ENCODE measurements at regions of chr4 and their contacts with region 1.

Region 1: GRCh38 chr4:163681208-163681821 is 186.8 kb downstream of the TMA16 start:
- DNase-seq: peak; percentile 89
- H3K4me3 ChIP-seq: no peak overlapping the region
- H3K27ac ChIP-seq: no peak overlapping the region
- H3K4me1 ChIP-seq: peaks cover 4% of the 10 kb centered on the region
- CTCF ChIP-seq: peak; percentile 89

Region 2: DNA sequence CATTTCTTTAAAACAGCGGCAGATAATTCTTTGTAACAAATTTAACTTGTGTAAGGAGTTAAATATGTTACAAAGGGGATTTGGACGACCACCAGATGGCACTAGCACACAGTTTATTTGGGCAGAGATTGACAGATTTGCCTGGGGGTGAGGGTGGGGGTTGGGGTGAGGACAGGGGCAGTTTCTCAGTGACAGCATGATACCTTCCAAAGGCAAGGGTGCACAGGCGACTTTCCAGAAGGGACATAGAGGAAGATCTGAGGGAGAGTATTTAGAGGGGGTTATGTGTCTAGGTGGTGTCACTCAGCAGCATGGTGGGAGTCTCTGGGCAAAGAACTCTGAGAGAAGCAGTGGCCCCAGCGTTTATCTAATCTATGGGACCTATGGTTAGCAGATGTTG is 196.4 kb before region 1 on chr4:
- CTCF ChIA-PET with region 1: no interaction called
- POLR2A ChIA-PET with region 1: no interaction called
- intact Hi-C with region 1: loop called (anchors 2 kb)
- DNase-seq: peak; percentile 77
- H3K4me3 ChIP-seq: no peak overlapping the region
- H3K27ac ChIP-seq: no peak overlapping the region
- H3K4me1 ChIP-seq: peaks cover 30% of the 10 kb centered on the region
- CTCF ChIP-seq: peak; percentile 96

Region 3: GRCh38 chr4:163755013-163755412 is 73.7 kb after region 1 on chr4:
- CTCF ChIA-PET with region 1: no interaction called
- POLR2A ChIA-PET with region 1: interaction called, 3 read pairs
- intact Hi-C with region 1: loop called (anchors 1 kb)
- DNase-seq: peak; percentile 55
- H3K4me3 ChIP-seq: no peak overlapping the region
- H3K27ac ChIP-seq: no peak overlapping the region
- H3K4me1 ChIP-seq: no peaks in the 10 kb centered on the region
- CTCF ChIP-seq: peak; percentile 89

Region 4: GRCh38 chr4:164731827-164732474 is 1050.6 kb after region 1 on chr4:
- CTCF ChIA-PET with region 1: no interaction called
- POLR2A ChIA-PET with region 1: interaction called, 3 read pairs
- intact Hi-C with region 1: loop called (anchors 5 kb)
- DNase-seq: peak; percentile 51
- H3K4me3 ChIP-seq: no peak overlapping the region
- H3K27ac ChIP-seq: no peak overlapping the region
- H3K4me1 ChIP-seq: peaks cover 8% of the 10 kb centered on the region
- CTCF ChIP-seq: peak; percentile 97